Heart left ventricle (tissue), 16 donors: ENCODE measurements at regions of chr1 and their contacts with region 1.

Region 1: DNA sequence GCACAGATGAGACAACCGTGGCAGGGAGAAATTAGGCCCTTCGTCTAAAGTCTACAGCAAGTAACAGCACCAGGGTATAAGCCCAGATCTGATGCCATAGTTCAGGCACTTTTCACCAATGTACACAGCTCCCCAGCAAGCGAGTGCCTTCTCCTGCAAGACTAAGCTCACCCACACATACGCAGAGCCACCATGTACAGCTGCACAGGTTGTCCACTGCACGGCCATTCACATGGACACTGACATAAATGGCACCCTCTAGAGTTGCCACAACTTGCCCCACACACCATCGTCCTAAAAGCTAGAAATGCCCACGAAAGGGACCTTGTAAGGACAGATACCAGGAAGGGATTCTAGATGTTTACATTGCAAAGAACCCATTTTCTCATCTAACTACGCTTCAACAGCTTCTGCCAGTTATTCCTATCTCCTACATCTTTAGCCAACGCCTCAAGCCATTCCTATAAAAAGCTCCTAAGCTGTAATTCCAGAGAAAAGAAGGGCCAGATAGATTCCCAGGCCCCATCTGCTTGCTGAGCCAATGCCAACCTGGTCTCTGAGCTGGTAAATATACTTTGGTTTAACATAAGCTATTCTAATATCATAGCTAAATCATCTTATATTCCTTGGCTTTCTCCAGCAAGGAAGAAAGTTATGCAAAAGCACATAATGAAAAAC is 174.0 kb upstream of the KAZN start:
- DNase-seq: no peak
- ATAC-seq: no peak
- H3K4me3 ChIP-seq: no peak overlapping the region
- H3K27ac ChIP-seq: no peak overlapping the region
- H3K4me1 ChIP-seq: no peaks in the 10 kb centered on the region
- H3K27me3 ChIP-seq: peaks cover 0 to 8% (median 0%) of the 10 kb centered on the region in 9 donors
- CTCF ChIP-seq: no peak
- POLR2A ChIP-seq: no peak

Region 2: GRCh38 chr1:14486401-14487201 is 62.1 kb after region 1 on chr1:
- intact Hi-C with region 1: loop called in 1 of 10 experiments (anchors 5 kb)
- DNase-seq: peak in 4 of 5 donors; percentile 20 to 47 (median 33)
- ATAC-seq: peak; percentile 73 to 95 (median 88)
- H3K4me3 ChIP-seq: no peak overlapping the region
- H3K27ac ChIP-seq: peak overlapping the region in 3 of 12 donors; percentile 13 to 52 (median 20)
- H3K4me1 ChIP-seq: peaks cover 0 to 7% (median 0%) of the 10 kb centered on the region in 12 donors
- H3K27me3 ChIP-seq: peaks cover 0 to 6% (median 0%) of the 10 kb centered on the region in 9 donors
- CTCF ChIP-seq: no peak
- POLR2A ChIP-seq: no peak